ENCODE measurements at regions of chr18 and their contacts with region 1.

Region 1: GRCh38 chr18:44838971-44839666 is 158.4 kb downstream of the SETBP1 start:
- DNase-seq: peak; percentile 71
- ATAC-seq: peak; percentile 94
- H3K4me3 ChIP-seq: peak overlapping the region in 1 of 5 experiments; percentile 22
- H3K4me3 Mint-ChIP-seq: peak overlapping the region; percentile 65
- H3K27ac ChIP-seq: no peak overlapping the region
- H3K27ac Mint-ChIP-seq: peak overlapping the region; percentile 75
- H3K4me1 ChIP-seq: peaks cover 38 to 56% of the 10 kb centered on the region in 2 donors
- H3K4me1 Mint-ChIP-seq: peaks cover 82% of the 10 kb centered on the region
- H3K27me3 ChIP-seq: no peaks in the 10 kb centered on the region
- H3K27me3 Mint-ChIP-seq: no peaks in the 10 kb centered on the region
- CTCF ChIP-seq: no peak

Region 2: GRCh38 chr18:44709307-44710126 is 129.6 kb before region 1 on chr18:
- CTCF ChIA-PET with region 1: no interaction called
- POLR2A ChIA-PET with region 1: interaction called, 10 read pairs
- intact Hi-C with region 1: no loop called
- DNase-seq: peak; percentile 24
- ATAC-seq: peak; percentile 45
- H3K4me3 ChIP-seq: no peak overlapping the region
- H3K4me3 Mint-ChIP-seq: peak overlapping the region; percentile 63
- H3K27ac ChIP-seq: peak overlapping the region in 1 of 2 donors; percentile 40
- H3K27ac Mint-ChIP-seq: peak overlapping the region; percentile 91
- H3K4me1 ChIP-seq: peaks cover 11 to 33% of the 10 kb centered on the region in 2 donors
- H3K4me1 Mint-ChIP-seq: peaks cover 60% of the 10 kb centered on the region
- H3K27me3 ChIP-seq: no peaks in the 10 kb centered on the region
- H3K27me3 Mint-ChIP-seq: no peaks in the 10 kb centered on the region
- CTCF ChIP-seq: no peak

Region 3: DNA sequence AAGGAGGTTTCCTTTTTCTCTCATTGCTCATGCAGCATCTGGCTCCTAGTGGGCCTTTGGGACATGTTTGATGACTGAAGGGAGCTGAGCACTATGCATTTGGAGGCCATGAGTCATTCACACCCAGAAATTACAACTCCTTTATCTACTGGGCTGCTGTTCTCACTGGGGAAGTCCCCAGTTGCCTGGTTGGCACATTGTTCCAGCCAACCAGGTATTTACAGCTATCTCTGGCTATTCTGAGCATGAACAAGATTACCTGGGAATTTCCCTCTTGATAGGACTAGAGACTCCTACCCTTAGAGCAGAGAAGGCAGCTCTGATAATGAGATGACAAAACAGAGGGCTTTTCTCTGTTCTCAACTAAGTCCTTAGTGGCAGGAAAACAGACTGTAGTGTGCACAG is 48.1 kb after region 1 on chr18:
- CTCF ChIA-PET with region 1: no interaction called
- POLR2A ChIA-PET with region 1: no interaction called
- intact Hi-C with region 1: loop called (anchors 5 kb)
- DNase-seq: peak; percentile 49
- ATAC-seq: peak; percentile 91
- H3K4me3 ChIP-seq: no peak overlapping the region
- H3K4me3 Mint-ChIP-seq: peak overlapping the region; percentile 42
- H3K27ac ChIP-seq: peak overlapping the region; percentile 52 to 77
- H3K27ac Mint-ChIP-seq: peak overlapping the region; percentile 92
- H3K4me1 ChIP-seq: peaks cover 35 to 37% of the 10 kb centered on the region in 2 donors
- H3K4me1 Mint-ChIP-seq: peaks cover 49% of the 10 kb centered on the region
- H3K27me3 ChIP-seq: no peaks in the 10 kb centered on the region
- H3K27me3 Mint-ChIP-seq: no peaks in the 10 kb centered on the region
- CTCF ChIP-seq: no peak

Measured in B cell (primary cell).